ENCODE measurements at regions of chr1 and their contacts with region 1.

Region 1: GRCh38 chr1:161153679-161154426 is at the start of gene UFC1:
- DNase-seq: peak; percentile 76 to 95
- ATAC-seq: peak; percentile 91 to 96 (median 94)
- H3K4me3 ChIP-seq: peak within 1 kb of the TSS; percentile 71
- H3K4me3 Mint-ChIP-seq: peak within 1 kb of the TSS; percentile 99
- H3K27ac ChIP-seq: peak within 1 kb of the TSS; percentile 87
- H3K27ac Mint-ChIP-seq: peak within 1 kb of the TSS; percentile 99 to 100
- H3K4me1 ChIP-seq: peaks cover 17% of the 10 kb centered on the region
- H3K4me1 Mint-ChIP-seq: peaks cover 22 to 35% of the 10 kb centered on the region in 2 donors
- H3K27me3 ChIP-seq: no peaks in the 10 kb centered on the region
- H3K27me3 Mint-ChIP-seq: no peaks in the 10 kb centered on the region
- CTCF ChIP-seq: no peak
- total RNA-seq, gene UFC1: 109 to 155 (median 117) TPM

Region 2: DNA sequence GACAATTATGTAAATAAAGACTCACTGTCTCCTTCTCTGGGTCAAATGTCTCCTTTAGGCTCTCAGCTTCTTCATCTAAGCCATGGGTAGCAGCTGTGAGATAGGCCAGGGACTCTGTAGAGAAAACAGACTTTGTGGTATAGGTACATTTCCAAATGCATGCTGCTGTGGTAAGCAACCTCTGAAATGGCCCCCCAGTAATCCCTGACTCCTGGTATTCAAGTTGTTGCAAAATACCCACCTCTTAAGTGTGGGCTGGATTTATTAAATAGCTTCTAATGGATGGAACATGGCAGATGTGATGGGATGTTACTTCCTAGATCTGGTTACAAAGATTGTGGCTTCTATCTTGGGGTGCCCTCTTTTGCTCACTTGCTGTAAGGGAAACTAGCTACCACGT is 857.8 kb before region 1 on chr1:
- intact Hi-C with region 1: no loop called
- DNase-seq: no peak
- ATAC-seq: no peak
- H3K4me3 ChIP-seq: no peak overlapping the region
- H3K4me3 Mint-ChIP-seq: no peak overlapping the region
- H3K27ac ChIP-seq: no peak overlapping the region
- H3K27ac Mint-ChIP-seq: peak overlapping the region in 1 of 2 donors; percentile 29
- H3K4me1 ChIP-seq: no peaks in the 10 kb centered on the region
- H3K4me1 Mint-ChIP-seq: no peaks in the 10 kb centered on the region
- H3K27me3 ChIP-seq: no peaks in the 10 kb centered on the region
- H3K27me3 Mint-ChIP-seq: no peaks in the 10 kb centered on the region
- CTCF ChIP-seq: no peak

Region 3: GRCh38 chr1:160971618-160972056 is 182.2 kb before region 1 on chr1:
- intact Hi-C with region 1: no loop called
- DNase-seq: no peak
- ATAC-seq: no peak
- H3K4me3 ChIP-seq: no peak overlapping the region
- H3K4me3 Mint-ChIP-seq: no peak overlapping the region
- H3K27ac ChIP-seq: no peak overlapping the region
- H3K27ac Mint-ChIP-seq: no peak overlapping the region
- H3K4me1 ChIP-seq: no peaks in the 10 kb centered on the region
- H3K4me1 Mint-ChIP-seq: no peaks in the 10 kb centered on the region
- H3K27me3 ChIP-seq: no peaks in the 10 kb centered on the region
- H3K27me3 Mint-ChIP-seq: peaks cover 15 to 20% of the 10 kb centered on the region in 2 donors
- CTCF ChIP-seq: no peak

Region 4: GRCh38 chr1:161071886-161072371 is 81.9 kb before region 1 on chr1:
- intact Hi-C with region 1: no loop called
- DNase-seq: peak; percentile 51 to 73
- ATAC-seq: peak in 2 of 3 donors; percentile 10 to 18
- H3K4me3 ChIP-seq: no peak overlapping the region
- H3K4me3 Mint-ChIP-seq: peak overlapping the region; percentile 40
- H3K27ac ChIP-seq: peak overlapping the region; percentile 40
- H3K27ac Mint-ChIP-seq: peak overlapping the region; percentile 89
- H3K4me1 ChIP-seq: peaks cover 41% of the 10 kb centered on the region
- H3K4me1 Mint-ChIP-seq: peaks cover 45 to 69% of the 10 kb centered on the region in 2 donors
- H3K27me3 ChIP-seq: no peaks in the 10 kb centered on the region
- H3K27me3 Mint-ChIP-seq: no peaks in the 10 kb centered on the region
- CTCF ChIP-seq: peak; percentile 76

Region 5: DNA sequence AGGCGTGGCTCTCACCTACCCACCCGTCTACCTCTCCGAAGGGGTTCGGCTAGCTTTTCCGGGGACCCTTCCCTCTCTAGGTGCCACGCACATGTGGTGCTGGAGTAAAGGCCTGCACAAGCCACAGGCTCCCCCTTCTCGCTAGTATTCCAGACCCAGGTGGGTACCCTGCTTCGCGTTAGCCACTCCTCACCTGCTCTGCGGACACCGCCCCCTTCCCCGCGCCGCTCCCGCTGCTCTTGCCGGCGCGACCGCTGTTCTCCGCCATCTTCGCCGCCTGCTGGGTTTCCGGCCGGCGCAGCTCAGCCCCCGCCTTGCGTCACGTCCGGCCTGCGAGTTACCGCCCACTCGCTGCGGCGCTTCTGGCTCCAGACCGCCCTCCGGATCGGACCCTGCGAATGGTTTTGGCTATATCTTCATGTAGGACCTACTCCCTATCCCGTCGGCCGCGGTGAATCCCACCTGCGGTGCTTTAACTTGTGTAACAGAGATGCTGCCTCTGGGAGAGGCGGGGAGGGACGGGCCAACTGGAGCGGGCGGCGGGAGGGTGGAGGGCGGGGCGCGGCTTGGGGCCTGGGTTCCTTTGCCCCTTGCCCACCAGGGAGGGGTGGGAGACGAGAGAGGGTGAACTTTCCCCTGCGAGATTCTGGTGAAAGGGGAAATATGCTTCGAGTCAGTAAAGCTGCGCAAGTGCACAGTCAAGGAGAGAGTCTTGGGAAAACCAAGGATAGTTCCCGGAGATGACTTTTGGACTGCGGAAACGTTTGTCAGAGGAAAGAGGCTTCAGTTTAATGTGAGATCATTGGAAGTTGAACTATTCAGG is 35.9 kb before region 1 on chr1 and contains the starts of genes NIT1 and PFDN2:
- intact Hi-C with region 1: loop called (anchors 2 kb)
- DNase-seq: peak; percentile 85 to 93
- ATAC-seq: peak; percentile 77 to 89 (median 85)
- H3K4me3 ChIP-seq: peak within 1 kb of the TSS; percentile 96
- H3K4me3 Mint-ChIP-seq: peak within 1 kb of the TSS; percentile 95
- H3K27ac ChIP-seq: peak within 1 kb of the TSS; percentile 88
- H3K27ac Mint-ChIP-seq: peak within 1 kb of the TSS; percentile 88 to 96
- H3K4me1 ChIP-seq: peaks cover 38% of the 10 kb centered on the region
- H3K4me1 Mint-ChIP-seq: peaks cover 39 to 46% of the 10 kb centered on the region in 2 donors
- H3K27me3 ChIP-seq: no peaks in the 10 kb centered on the region
- H3K27me3 Mint-ChIP-seq: no peaks in the 10 kb centered on the region
- CTCF ChIP-seq: no peak
- total RNA-seq, gene NIT1: 26.5 to 31.7 (median 31.6) TPM
- total RNA-seq, gene PFDN2: 31.6 to 40.0 (median 35.0) TPM

Region 6: DNA sequence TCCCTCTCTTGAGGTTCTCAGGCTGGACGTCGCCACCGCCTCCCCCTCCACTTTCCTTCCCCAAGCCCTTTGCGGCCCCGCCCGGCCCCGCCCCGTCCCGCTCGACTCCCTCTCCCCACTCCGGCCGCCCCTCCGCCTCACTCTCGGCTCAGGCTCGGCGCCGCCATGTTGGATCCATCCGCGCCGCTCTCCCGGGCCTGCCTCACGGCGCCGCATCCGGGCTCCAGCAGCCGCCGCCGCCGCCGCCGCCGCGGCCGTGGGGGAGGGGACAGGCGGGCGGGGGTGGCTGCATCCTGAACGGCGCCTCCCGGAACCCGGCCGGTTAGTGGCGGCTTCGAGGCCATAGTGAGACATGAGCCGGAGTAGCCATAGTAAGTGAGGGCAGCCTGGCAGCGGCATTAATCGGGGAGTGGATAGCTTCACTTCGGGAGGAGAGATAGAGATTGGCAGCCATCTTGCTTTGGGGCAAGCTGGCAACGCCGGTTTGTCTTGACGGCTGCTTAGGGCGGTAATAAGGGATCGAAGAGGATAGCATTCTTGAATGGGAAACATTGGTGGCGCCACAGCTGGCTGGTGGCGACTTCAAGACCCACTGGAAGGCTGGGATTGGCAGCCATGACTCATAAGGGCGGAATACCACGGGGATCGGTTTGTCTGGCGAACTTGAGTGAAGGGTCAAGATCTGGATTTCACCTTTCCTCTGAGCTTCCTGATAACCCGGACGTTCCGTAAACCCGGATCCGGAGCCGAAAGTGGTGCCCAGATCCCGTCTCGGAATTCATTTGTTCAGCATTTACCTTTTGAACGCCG is 21.2 kb before region 1 on chr1 and contains the start of gene DEDD:
- intact Hi-C with region 1: loop called (anchors 1 kb)
- DNase-seq: peak; percentile 81 to 95
- ATAC-seq: peak; percentile 92 to 97 (median 95)
- H3K4me3 ChIP-seq: peak within 1 kb of the TSS; percentile 77
- H3K4me3 Mint-ChIP-seq: no peak within 1 kb of the TSS
- H3K27ac ChIP-seq: peak within 1 kb of the TSS; percentile 81
- H3K27ac Mint-ChIP-seq: no peak within 1 kb of the TSS
- H3K4me1 ChIP-seq: peaks cover 21% of the 10 kb centered on the region
- H3K4me1 Mint-ChIP-seq: peaks cover 21 to 43% of the 10 kb centered on the region in 2 donors
- H3K27me3 ChIP-seq: no peaks in the 10 kb centered on the region
- H3K27me3 Mint-ChIP-seq: no peaks in the 10 kb centered on the region
- CTCF ChIP-seq: no peak
- total RNA-seq, gene DEDD: 40.6 to 44.0 (median 43.0) TPM